ENCODE measurements at regions of chr1 and their contacts with region 1.

Region 1: GRCh38 chr1:84319662-84320061 is 18.2 kb downstream of the SAMD13 start:
- DNase-seq: no peak
- H3K4me3 ChIP-seq: no peak overlapping the region
- H3K27ac ChIP-seq: no peak overlapping the region
- H3K4me1 ChIP-seq: no peaks in the 10 kb centered on the region
- H3K27me3 ChIP-seq: no peaks in the 10 kb centered on the region
- CTCF ChIP-seq: no peak

Region 2: GRCh38 chr1:84390226-84390625 is 70.6 kb after region 1 on chr1:
- intact Hi-C with region 1: loop called (anchors 10 kb)
- DNase-seq: no peak
- H3K4me3 ChIP-seq: no peak overlapping the region
- H3K27ac ChIP-seq: no peak overlapping the region
- H3K4me1 ChIP-seq: no peaks in the 10 kb centered on the region
- H3K27me3 ChIP-seq: no peaks in the 10 kb centered on the region
- CTCF ChIP-seq: no peak

Region 3: GRCh38 chr1:84653130-84653677 is 333.5 kb after region 1 on chr1:
- intact Hi-C with region 1: no loop called
- DNase-seq: no peak
- H3K4me3 ChIP-seq: no peak overlapping the region
- H3K27ac ChIP-seq: no peak overlapping the region
- H3K4me1 ChIP-seq: no peaks in the 10 kb centered on the region
- H3K27me3 ChIP-seq: no peaks in the 10 kb centered on the region
- CTCF ChIP-seq: no peak